ENCODE measurements at regions of chr7 and their contacts with region 1.

Region 1: GRCh38 chr7:22559829-22560489 is 60.0 kb upstream of the STEAP1B start:
- DNase-seq: peak; percentile 62
- H3K4me3 Mint-ChIP-seq: no peak overlapping the region
- H3K27ac Mint-ChIP-seq: no peak overlapping the region
- H3K4me1 Mint-ChIP-seq: peaks cover 44% of the 10 kb centered on the region
- H3K27me3 Mint-ChIP-seq: peaks cover 18% of the 10 kb centered on the region

Region 2: GRCh38 chr7:22549667-22550513 is 10.1 kb before region 1 on chr7:
- intact Hi-C with region 1: no loop called
- DNase-seq: peak; percentile 27
- H3K4me3 Mint-ChIP-seq: peak overlapping the region; percentile 47
- H3K27ac Mint-ChIP-seq: no peak overlapping the region
- H3K4me1 Mint-ChIP-seq: peaks cover 7% of the 10 kb centered on the region
- H3K27me3 Mint-ChIP-seq: peaks cover 69% of the 10 kb centered on the region

Region 3: DNA sequence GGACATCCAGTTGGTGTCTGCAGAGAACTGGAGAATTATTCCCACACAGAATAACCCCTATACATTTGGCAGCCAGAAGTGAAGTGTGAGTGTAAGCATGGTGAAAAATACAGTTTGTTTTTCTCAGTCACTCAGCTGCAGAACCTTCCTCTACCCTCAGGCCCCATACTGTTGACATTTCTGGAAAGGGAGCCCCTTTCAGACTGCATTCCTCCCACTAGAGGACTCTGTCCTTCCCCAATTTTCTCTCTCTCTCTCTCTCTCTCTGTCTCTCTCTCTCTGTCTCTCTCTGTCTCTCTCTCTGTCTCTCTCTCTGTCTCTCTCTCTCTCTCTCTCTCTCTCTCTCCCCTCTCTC is 26.8 kb after region 1 on chr7:
- intact Hi-C with region 1: loop called (anchors 2 kb)
- DNase-seq: no peak
- H3K4me3 Mint-ChIP-seq: no peak overlapping the region
- H3K27ac Mint-ChIP-seq: no peak overlapping the region
- H3K4me1 Mint-ChIP-seq: peaks cover 18% of the 10 kb centered on the region
- H3K27me3 Mint-ChIP-seq: peaks cover 61% of the 10 kb centered on the region

Region 4: GRCh38 chr7:22667562-22668239 is 107.7 kb after region 1 on chr7:
- intact Hi-C with region 1: loop called (anchors 1 kb)
- DNase-seq: no peak
- H3K4me3 Mint-ChIP-seq: no peak overlapping the region
- H3K27ac Mint-ChIP-seq: peak overlapping the region; percentile 59
- H3K4me1 Mint-ChIP-seq: peaks cover 68% of the 10 kb centered on the region
- H3K27me3 Mint-ChIP-seq: peaks cover 9% of the 10 kb centered on the region

Region 5: GRCh38 chr7:22782616-22783232 is 222.8 kb after region 1 on chr7:
- intact Hi-C with region 1: loop called (anchors 1 kb)
- DNase-seq: peak; percentile 58
- H3K4me3 Mint-ChIP-seq: no peak overlapping the region
- H3K27ac Mint-ChIP-seq: no peak overlapping the region
- H3K4me1 Mint-ChIP-seq: no peaks in the 10 kb centered on the region
- H3K27me3 Mint-ChIP-seq: peaks cover 17% of the 10 kb centered on the region

Measured in activated T-helper 2 cell treated with anti-CD3 and anti-CD28 coated beads, Interferon-gamma antibody, Interleukin-2, Interleukin-4, amounts not matched to agents 10 μg/mL and 5 μg/mL and 100 μg/mL, durations not matched to agents 14 hours and 24 hours and 36 hours (primary cell).